Right ventricle myocardium inferior (tissue), 1 donor: ENCODE measurements at regions of chr1 and their contacts with region 1.

Region 1: DNA sequence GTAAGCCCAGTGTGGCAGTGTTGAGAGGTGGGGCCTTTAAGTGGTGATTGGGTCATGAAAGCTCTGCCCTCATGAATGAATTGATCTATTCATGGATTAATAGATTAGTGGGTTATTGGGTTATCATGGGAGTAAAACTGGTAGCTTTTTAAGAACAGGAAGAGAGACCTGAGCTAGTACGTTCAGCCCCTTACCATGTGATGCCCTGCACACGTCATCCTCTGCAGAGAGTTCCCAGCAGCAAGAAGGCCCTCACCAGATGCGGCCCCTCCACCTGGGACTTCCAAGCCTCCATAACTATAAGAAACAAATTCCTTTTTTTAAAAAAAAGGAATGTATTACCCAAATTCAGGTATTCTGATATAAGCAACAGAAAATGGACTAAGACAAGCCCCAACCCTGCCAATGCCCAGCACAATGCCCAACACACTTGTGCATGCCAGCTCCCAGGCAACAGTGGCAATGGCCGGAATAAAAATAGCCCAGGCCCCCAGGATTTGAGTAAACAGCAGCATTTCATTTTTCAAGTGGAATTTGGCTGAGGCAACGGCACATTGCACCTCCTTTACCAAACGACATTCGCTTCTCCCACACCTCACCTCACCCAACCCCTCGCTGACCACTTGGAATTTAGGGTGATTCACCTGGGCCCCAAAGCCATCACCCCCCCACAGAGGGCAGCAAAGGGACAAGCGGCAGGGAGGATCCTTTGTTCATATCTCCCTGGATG is 215.9 kb downstream of the TOMM20 start:
- DNase-seq: no peak
- ATAC-seq: no peak

Region 2: GRCh38 chr1:234862944-234863515 is 49.7 kb before region 1 on chr1:
- intact Hi-C with region 1: loop called (anchors 5 kb)
- DNase-seq: peak; percentile 83
- ATAC-seq: peak; percentile 68

Region 3: GRCh38 chr1:235229868-235230267 is 317.2 kb after region 1 on chr1:
- intact Hi-C with region 1: no loop called
- DNase-seq: no peak
- ATAC-seq: no peak